ENCODE measurements at regions of chr5 and their contacts with region 1.

Region 1: DNA sequence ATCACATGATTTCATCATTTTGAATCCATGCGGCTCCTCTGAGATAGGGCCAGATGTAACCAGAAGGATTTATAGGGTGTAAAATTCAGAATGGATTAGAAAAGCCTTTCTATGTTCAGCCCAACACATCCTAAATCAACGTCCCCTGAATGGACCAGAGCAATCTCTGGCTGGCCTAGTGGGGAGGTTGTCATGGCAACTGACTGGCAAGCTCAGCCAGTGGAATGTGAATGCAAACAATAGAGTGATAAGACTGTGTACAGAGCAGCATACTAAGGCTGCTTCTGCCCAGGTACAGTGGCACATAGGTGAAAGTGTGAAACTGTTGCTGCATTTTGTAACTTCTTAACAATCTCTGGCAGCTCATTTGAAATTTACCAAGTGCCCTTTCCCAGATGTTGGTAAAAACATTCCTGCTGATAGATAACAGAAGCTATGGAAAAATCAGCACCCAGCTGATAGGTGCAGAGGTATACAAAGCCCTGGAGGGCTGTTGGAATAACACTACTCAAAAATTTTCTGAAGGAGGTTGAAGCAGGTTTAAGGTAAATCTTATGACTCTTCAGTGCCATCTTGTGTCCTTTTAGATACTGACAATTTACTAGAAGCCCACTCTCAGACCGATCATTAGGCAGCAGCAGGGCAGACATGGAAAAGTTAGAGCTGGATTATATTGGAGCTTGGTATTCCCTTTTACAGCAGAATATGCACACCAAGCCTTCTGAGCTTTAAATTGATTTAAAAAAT is 267.2 kb downstream of the RAB3C start:
- DNase-seq: peak; percentile 68 to 88 (median 82)
- ATAC-seq: peak; percentile 96
- H3K4me3 ChIP-seq: no peak overlapping the region
- H3K27ac ChIP-seq: peak overlapping the region in 1 of 4 donors; percentile 7
- H3K4me1 ChIP-seq: peaks cover 10% of the 10 kb centered on the region
- H3K27me3 ChIP-seq: no peaks in the 10 kb centered on the region
- CTCF ChIP-seq: peak in 6 of 7 experiments; percentile 11 to 59 (median 54)
- POLR2A ChIP-seq: no peak

Region 2: GRCh38 chr5:58498340-58498942 is 351.7 kb before region 1 on chr5:
- intact Hi-C with region 1: loop called (anchors 10 kb)
- DNase-seq: peak; percentile 35 to 67 (median 52)
- ATAC-seq: peak; percentile 33
- H3K4me3 ChIP-seq: no peak overlapping the region
- H3K27ac ChIP-seq: no peak overlapping the region
- H3K4me1 ChIP-seq: no peaks in the 10 kb centered on the region
- H3K27me3 ChIP-seq: no peaks in the 10 kb centered on the region
- CTCF ChIP-seq: peak; percentile 46 to 87 (median 81)
- POLR2A ChIP-seq: no peak

Region 3: DNA sequence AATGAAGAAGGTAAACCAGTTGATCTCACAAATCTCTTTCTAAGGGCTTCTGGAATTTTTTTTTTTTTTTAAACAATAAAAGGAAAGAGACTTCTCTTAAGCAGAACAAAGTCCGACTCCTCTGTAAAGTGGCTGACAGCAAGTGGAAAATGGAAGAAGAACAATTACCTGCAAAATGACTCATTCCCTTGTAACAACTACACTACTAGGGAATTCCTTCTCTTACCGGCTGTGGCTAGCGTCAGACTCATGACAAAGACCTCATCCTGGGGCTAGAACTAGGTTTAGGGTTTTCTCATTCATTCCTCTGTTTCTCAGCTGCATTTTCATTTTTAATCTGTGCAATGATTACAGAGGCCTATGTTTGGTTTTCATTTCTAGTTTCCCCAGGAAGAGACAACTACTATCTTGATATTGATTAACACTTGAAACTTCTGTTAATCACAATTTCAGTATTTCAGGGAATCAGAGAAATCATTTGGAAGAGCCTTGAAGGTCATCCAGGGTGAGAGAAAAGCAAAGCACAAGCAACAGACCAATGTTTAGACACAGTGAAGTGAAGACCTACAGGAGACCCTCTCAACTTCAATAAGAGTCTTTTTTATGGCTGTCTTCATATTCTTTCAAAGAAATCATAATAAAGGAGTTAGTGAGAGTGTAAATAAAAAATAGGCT is 170.7 kb after region 1 on chr5:
- intact Hi-C with region 1: no loop called
- DNase-seq: no peak
- ATAC-seq: no peak
- H3K4me3 ChIP-seq: no peak overlapping the region
- H3K27ac ChIP-seq: no peak overlapping the region
- H3K4me1 ChIP-seq: no peaks in the 10 kb centered on the region
- H3K27me3 ChIP-seq: no peaks in the 10 kb centered on the region
- CTCF ChIP-seq: no peak
- POLR2A ChIP-seq: no peak

Region 4: DNA sequence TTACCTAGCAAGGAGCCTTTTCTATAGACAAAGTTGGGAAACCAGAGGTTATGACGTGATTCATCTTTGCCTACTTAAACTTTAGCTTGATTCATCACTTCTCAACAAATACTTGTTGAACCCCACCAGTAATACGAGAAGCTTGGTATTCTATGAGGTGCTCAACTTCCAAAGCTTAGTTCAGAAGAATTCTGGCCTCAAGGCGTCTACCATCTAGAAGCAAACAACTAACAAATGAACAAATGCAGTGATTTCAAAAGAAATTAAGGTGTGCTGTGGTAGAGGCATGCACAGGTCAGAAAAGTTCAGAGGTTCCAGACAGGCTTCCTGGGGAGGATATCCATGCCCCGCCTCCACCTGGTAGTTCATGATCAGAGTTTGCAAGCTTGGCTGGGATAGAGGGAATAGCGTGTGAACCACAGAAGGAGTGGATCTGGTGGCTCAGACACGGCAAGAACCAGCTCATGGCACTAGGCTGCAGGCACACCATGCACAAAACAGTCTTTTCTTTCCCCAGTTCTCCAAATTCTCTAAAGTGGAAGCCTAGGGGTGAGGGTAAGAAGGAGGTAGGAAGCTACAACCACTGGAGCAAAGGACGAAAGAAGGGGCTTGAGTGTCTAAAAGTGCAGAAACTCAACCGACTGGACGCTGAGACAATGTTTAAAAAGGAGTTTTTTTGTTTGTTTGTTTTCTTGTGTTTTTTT is 205.8 kb after region 1 on chr5:
- intact Hi-C with region 1: no loop called
- DNase-seq: no peak
- ATAC-seq: no peak
- H3K4me3 ChIP-seq: no peak overlapping the region
- H3K27ac ChIP-seq: no peak overlapping the region
- H3K4me1 ChIP-seq: no peaks in the 10 kb centered on the region
- H3K27me3 ChIP-seq: no peaks in the 10 kb centered on the region
- CTCF ChIP-seq: no peak
- POLR2A ChIP-seq: no peak

Measured in body of pancreas (tissue), 4 donors.